Ascending aorta (tissue), 2 donors: ENCODE measurements at regions of chr3 and their contacts with region 1.

Region 1: GRCh38 chr3:149657926-149658733 is at the start of gene WWTR1:
- DNase-seq: peak; percentile 79 to 97
- H3K4me3 ChIP-seq: peak within 1 kb of the TSS; percentile 81 to 83
- H3K27ac ChIP-seq: peak within 1 kb of the TSS; percentile 94 to 95
- H3K4me1 ChIP-seq: peaks cover 10 to 20% of the 10 kb centered on the region in 2 donors
- H3K27me3 ChIP-seq: no peaks in the 10 kb centered on the region
- CTCF ChIP-seq: peak; percentile 24 to 57 (median 33)
- total RNA-seq, gene WWTR1: 282 TPM

Region 2: DNA sequence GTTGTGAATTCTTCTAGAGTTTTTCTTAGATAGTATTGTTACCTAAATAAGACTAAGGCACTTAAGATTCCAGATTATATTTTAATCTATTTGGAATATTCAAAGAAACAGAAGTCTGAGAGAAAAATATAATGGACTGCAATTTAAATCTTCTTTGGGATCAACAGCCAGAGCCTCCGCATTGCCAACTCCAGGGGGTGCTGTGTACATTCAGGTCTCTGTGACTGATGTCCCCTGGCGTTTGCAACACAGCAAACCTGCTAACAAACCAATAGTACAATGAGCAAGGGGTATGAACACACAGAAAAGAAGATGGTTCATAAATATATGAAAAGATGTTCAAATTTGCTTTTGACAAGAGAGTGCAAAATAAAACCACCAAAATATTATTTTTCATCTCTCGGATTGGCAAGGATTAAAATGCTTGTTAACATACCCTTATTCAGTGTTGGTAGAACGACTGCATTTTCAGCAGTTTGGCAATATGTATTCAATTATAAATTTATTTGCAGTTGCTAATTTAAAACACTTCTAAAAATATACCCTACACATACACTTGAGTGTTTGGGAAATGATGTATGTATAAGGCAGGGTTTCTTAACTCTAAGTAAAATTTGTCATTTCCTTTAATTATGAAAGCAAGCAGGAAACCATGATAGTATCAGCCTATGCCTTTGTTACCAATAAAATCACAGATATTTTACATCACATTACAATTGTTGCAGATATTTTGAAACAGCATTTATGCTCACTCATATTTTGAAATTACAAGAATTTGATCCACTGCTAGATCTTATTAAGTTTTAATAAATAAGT is 264.6 kb before region 1 on chr3:
- intact Hi-C with region 1: loop called (anchors 10 kb)
- DNase-seq: peak in 1 of 2 donors; percentile 82
- H3K4me3 ChIP-seq: no peak overlapping the region
- H3K27ac ChIP-seq: peak overlapping the region in 1 of 2 donors; percentile 8
- H3K4me1 ChIP-seq: peaks cover 0 to 14% of the 10 kb centered on the region in 2 donors
- H3K27me3 ChIP-seq: no peaks in the 10 kb centered on the region
- CTCF ChIP-seq: peak; percentile 75 to 84 (median 76)

Region 3: GRCh38 chr3:149534671-149535332 is 123.3 kb before region 1 on chr3:
- intact Hi-C with region 1: loop called (anchors 5 kb)
- DNase-seq: no peak
- H3K4me3 ChIP-seq: no peak overlapping the region
- H3K27ac ChIP-seq: peak overlapping the region; percentile 66 to 82
- H3K4me1 ChIP-seq: peaks cover 0 to 62% of the 10 kb centered on the region in 2 donors
- H3K27me3 ChIP-seq: no peaks in the 10 kb centered on the region
- CTCF ChIP-seq: no peak

Region 4: DNA sequence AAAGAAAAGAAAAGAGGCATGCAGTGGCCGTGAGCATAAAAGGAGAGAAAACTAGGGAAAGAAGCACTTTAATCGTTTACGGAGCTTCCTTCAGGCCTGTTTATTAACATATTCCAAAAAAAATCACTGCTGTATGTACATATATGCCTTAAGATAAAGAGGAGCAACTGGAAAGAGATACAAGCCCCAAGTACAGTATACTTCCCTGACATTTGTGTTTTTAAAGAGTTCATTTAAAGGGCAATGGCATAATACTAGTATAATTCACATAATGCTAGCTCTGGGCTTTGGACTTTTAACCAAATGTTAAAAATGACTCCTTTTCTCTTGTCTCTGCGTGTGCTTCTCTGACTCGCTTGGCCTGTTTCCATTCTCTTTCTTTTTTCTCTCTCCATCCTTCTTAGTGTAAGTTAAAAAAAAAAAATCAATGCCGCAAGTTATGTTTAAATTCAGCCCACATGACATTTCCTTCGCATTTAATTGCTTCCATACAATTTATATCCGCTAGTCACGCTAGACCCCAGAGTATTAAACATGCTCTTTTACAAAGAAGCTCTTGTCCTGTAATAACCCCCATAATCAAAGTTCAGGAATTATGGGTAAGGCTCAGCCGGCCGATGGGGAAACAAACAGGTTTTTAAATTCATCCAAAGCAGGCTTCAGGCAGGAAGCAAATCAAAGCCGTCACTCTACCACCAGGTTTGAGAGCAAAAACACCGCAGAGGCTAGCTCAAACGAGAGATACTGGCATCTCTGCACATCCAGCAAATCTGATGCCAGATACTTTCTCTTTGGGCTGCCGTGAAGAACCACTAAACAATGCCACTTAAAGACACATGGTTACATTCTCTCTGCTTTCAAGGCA is 19.7 kb before region 1 on chr3:
- intact Hi-C with region 1: loop called (anchors 2 kb)
- DNase-seq: no peak
- H3K4me3 ChIP-seq: peak overlapping the region; percentile 30 to 44
- H3K27ac ChIP-seq: peak overlapping the region; percentile 46 to 66
- H3K4me1 ChIP-seq: peaks cover 15 to 60% of the 10 kb centered on the region in 2 donors
- H3K27me3 ChIP-seq: no peaks in the 10 kb centered on the region
- CTCF ChIP-seq: no peak

Region 5: GRCh38 chr3:149812606-149813366 is 154.7 kb after region 1 on chr3 and contains the start of gene RNF13:
- intact Hi-C with region 1: loop called (anchors 5 kb)
- DNase-seq: peak; percentile 95 to 99
- H3K4me3 ChIP-seq: peak within 1 kb of the TSS; percentile 79 to 85
- H3K27ac ChIP-seq: peak within 1 kb of the TSS; percentile 99
- H3K4me1 ChIP-seq: peaks cover 0 to 29% of the 10 kb centered on the region in 2 donors
- H3K27me3 ChIP-seq: no peaks in the 10 kb centered on the region
- CTCF ChIP-seq: no peak
- total RNA-seq, gene RNF13: 69.3 TPM

Region 6: GRCh38 chr3:150546226-150547044 is 888.3 kb after region 1 on chr3 and contains the starts of genes EIF2A and SERP1:
- intact Hi-C with region 1: no loop called
- DNase-seq: peak; percentile 94 to 99
- H3K4me3 ChIP-seq: peak within 1 kb of the TSS; percentile 89 to 99
- H3K27ac ChIP-seq: peak within 1 kb of the TSS; percentile 99 to 100
- H3K4me1 ChIP-seq: peaks cover 0 to 24% of the 10 kb centered on the region in 2 donors
- H3K27me3 ChIP-seq: no peaks in the 10 kb centered on the region
- CTCF ChIP-seq: no peak
- total RNA-seq, gene EIF2A: 83.2 TPM
- total RNA-seq, gene SERP1: 237 TPM